ENCODE measurements at regions of chr6 and their contacts with region 1.

Region 1: DNA sequence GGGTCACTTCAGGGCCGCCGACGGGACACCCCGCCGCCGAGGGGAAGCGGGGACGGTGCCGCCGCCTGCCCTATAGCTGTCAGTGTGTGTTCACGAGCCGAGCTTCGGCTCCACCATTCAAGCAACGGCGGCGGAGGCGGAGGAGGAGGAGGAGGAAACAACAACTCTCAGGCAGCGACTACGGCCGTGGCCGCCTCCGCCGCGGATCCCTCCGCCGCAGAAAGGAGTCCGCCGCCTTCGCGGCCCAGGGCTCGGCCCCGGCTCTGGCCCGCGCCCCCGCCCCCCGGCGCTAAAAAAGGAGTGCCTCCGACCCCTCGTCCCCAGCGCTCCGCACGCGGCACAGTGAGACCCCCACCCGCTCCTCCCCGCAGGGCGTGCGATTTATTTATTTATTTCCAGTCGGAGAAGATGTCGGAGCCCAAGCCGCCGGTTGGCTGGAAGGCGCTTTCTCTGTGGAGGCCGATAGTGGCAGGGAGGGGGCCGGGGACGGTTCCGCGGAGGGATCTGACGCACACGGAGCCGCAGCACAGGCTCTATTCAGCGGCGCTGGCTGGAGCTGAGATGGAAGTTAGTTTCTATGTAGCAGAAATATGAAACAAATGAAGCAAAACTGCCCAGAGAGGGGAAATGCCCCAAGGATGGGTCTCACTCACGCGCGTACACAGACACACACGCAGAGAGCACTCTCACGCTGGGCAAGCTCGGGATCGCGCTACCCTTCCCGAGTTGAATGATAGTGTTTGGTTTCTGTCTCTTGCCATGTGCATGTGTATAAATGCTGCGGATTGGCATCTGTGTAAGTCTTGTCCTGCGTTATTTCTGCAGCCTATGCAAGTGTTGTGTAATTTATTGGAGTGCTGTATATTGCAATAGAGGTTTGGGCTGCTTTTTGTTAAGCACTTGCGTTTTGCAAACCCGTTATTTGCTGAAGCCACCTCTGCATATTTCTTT is at the start of gene PHIP:
- DNase-seq: peak; percentile 82 to 93 (median 90)
- H3K4me3 ChIP-seq: peak within 1 kb of the TSS; percentile 68 to 94 (median 84)
- H3K27ac ChIP-seq: peak within 1 kb of the TSS; percentile 93 to 100 (median 99)
- H3K27me3 ChIP-seq: no peaks in the 10 kb centered on the region
- CTCF ChIP-seq: peak in 16 of 56 donors; percentile 5 to 42 (median 12)
- total RNA-seq, gene PHIP: 28.1 to 46.6 (median 34.7) TPM

Region 2: GRCh38 chr6:78867370-78868040 is 210.8 kb before region 1 on chr6 and contains the start of gene IRAK1BP1:
- intact Hi-C with region 1: loop called in 1 of 2 experiments (anchors 5 kb)
- DNase-seq: peak; percentile 77 to 91 (median 88)
- H3K4me3 ChIP-seq: peak within 1 kb of the TSS; percentile 69 to 99 (median 90)
- H3K27ac ChIP-seq: peak within 1 kb of the TSS in 43 of 59 donors; percentile 2 to 83 (median 51)
- H3K27me3 ChIP-seq: no peaks in the 10 kb centered on the region
- CTCF ChIP-seq: peak in 13 of 56 donors; percentile 4 to 32 (median 20)
- total RNA-seq, gene IRAK1BP1: 5.5 to 15.5 (median 10.0) TPM

Region 3: GRCh38 chr6:79233611-79234149 is 155.3 kb after region 1 on chr6:
- intact Hi-C with region 1: loop called (anchors 1 kb)
- DNase-seq: peak; percentile 78 to 89 (median 86)
- H3K4me3 ChIP-seq: peak overlapping the region; percentile 60 to 91 (median 82)
- H3K27ac ChIP-seq: peak overlapping the region; percentile 54 to 96 (median 89)
- H3K27me3 ChIP-seq: no peaks in the 10 kb centered on the region
- CTCF ChIP-seq: peak in 31 of 56 donors; percentile 8 to 52 (median 31)

Region 4: DNA sequence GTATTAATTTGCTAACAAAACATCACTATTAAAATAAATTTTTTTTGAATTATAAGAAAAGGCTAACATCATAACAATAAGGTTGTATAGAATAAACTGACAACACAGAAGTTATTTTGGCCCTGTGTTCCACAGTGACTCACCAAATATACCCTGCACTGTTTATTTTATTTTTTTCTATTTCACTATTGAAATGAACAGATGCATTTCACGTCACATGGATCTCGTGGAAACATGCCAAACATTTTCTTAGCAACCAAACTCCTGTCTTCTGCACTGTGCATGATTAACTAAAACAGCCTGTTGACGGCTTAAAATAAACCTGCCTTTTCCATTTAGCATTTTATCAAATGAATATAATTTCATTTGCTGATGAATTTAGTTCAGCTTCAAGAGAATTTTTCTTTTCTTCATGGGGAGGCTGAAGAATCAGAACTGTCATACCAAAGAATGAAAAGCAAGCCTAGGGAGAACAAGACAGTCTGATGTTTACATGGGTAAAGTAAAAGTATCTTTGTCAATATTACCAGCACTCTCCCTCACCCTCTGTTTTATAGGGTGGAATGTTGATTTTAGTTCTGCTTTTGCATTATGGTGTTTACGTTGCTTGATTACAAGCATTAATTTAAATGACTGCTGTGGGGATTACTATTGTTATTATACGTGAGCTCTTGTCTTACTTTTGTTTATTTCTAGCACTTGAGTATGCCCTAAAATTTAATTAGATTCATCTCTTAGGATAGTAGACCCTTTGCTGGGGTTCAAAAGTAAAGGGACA is 343.5 kb after region 1 on chr6:
- intact Hi-C with region 1: loop called (anchors 1 to 2 kb)
- DNase-seq: peak in 3 of 10 donors; percentile 22 to 64 (median 52)
- H3K4me3 ChIP-seq: peak overlapping the region; percentile 3 to 71 (median 52)
- H3K27ac ChIP-seq: peak overlapping the region in 58 of 59 donors; percentile 13 to 95 (median 84)
- H3K27me3 ChIP-seq: no peaks in the 10 kb centered on the region
- CTCF ChIP-seq: peak in 2 of 56 donors; percentile 5 to 12

Region 5: DNA sequence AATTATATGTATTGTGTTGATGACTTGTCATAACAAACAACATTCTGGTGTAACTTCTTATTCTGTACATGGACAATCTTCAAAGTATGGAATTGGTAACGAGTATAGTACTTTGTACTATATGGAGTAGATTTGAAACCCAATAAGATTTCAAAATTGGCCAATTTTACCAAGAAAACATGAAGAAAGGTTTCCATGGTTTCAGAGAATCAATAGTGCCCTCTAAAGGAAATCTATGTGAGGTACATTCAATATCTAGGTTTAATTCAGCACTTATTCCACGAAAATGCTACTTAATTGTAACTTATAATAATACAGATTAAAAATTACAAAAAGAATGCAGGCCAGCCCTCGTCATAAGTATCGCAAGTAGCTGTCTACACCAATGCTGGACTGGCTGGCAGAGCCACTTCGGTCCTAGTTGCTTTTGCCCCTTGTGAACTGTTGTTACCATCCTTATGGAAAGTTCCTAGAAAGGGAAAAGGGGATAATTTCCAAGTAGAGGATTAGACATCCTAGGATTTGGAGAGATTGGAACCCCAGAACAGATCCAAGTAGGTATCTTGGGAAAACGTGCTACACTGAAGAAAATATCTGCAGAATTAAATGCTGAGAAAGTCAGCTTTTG is 388.0 kb after region 1 on chr6:
- intact Hi-C with region 1: loop called in 1 of 2 experiments (anchors 10 kb)
- DNase-seq: no peak
- H3K4me3 ChIP-seq: no peak overlapping the region
- H3K27ac ChIP-seq: no peak overlapping the region
- H3K27me3 ChIP-seq: no peaks in the 10 kb centered on the region
- CTCF ChIP-seq: peak; percentile 17 to 79 (median 64)

Region 6: DNA sequence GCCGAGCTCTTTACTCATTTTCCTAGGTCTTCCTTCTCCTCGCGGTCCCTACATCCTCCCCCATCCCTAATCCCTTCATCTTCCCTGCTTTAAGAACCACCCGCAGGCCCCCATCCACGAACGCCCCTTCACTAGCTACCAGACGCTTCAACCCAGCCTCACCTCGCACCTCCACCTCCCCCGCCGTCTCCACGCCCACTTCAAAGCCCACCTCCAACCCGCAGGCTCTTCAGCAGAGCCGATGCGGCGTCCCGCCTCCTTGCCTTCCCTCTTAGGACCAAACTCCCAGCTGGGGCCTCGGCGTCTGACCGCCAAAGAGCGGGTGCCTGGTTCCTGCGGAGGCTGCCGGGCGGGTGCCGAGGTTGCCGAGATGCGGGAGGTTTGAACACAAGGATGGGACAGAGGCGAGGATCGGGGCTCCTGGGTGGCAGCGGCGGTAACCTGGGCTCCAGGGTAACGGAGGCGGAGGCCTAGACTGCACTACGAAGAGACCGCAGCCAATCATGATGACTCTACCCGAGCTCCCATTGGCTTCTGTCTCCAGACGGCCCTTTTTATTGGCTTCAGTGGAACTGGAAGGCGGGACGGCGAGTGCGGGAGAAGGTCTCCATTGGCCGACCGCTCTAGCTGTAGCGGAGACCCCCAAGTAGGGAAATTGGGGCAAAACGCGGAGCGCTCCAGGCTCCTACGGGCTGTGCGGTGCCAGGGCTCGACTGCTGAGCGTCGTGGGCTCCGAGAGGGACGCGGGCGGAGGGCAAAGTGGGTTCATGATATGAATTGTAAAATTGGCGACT is 458.8 kb after region 1 on chr6 and contains the start of gene LCA5:
- intact Hi-C with region 1: loop called (anchors 1 to 2 kb)
- DNase-seq: peak; percentile 84 to 97 (median 96)
- H3K4me3 ChIP-seq: peak within 1 kb of the TSS; percentile 67 to 95 (median 85)
- H3K27ac ChIP-seq: peak within 1 kb of the TSS; percentile 37 to 96 (median 91)
- H3K27me3 ChIP-seq: no peaks in the 10 kb centered on the region
- CTCF ChIP-seq: peak in 10 of 56 donors; percentile 3 to 38 (median 15)
- total RNA-seq, gene LCA5: 7.3 to 17.7 (median 10.5) TPM

Region 7: DNA sequence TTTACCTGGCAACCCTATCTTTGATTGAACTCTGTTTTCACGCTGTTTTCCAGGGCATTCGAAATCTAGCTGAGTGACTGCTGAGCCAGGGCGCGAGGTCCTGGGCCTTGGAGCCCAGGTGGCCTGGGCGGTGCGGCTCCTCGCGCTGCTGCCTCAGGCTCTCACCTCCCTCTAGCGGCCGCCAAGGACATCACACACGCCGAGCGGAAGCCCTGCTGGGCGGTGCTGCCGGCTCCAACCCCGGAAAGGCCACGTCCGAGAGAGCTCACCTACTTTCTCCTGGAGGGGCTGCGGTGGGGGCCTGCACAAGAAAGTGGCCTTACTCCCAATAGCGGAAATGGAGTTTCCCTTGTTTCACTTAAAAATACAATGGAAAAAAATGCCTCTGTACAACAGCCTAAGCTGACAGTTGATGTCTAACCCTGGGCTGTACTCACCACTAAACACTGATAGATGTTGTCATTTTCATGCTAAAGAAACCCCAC is 791.3 kb after region 1 on chr6:
- intact Hi-C with region 1: loop called in 1 of 2 experiments (anchors 5 kb)
- DNase-seq: peak; percentile 49 to 87 (median 70)
- H3K4me3 ChIP-seq: peak overlapping the region in 57 of 59 donors; percentile 8 to 65 (median 41)
- H3K27ac ChIP-seq: peak overlapping the region in 2 of 59 donors; percentile 25 to 44
- H3K27me3 ChIP-seq: peaks cover 0 to 3% (median 0%) of the 10 kb centered on the region in 45 donors
- CTCF ChIP-seq: peak; percentile 49 to 97 (median 91)

Measured in dorsolateral prefrontal cortex (tissue), 120 donors.